HCT116 (cell line): ENCODE measurements at regions of chr4 and their contacts with region 1.

Region 1: GRCh38 chr4:141654098-141654497 is 17.7 kb downstream of the IL15 start:
- DNase-seq: no peak
- ATAC-seq: peak; percentile 93
- H3K4me3 ChIP-seq: no peak overlapping the region
- H3K27ac ChIP-seq: no peak overlapping the region
- H3K4me1 ChIP-seq: no peaks in the 10 kb centered on the region
- H3K27me3 ChIP-seq: no peaks in the 10 kb centered on the region
- CTCF ChIP-seq: peak; percentile 2 to 82 (median 68); a peak in 4 of 6 replicates
- POLR2A ChIP-seq: no peak
- RAD21 ChIP-seq: peak; percentile 43

Region 2: GRCh38 chr4:141081921-141082395 is 572.1 kb before region 1 on chr4:
- CTCF ChIA-PET with region 1: no interaction called
- POLR2A ChIA-PET with region 1: no interaction called
- RAD21 ChIA-PET with region 1: no interaction called
- intact Hi-C with region 1: no loop called
- DNase-seq: no peak
- ATAC-seq: no peak
- H3K4me3 ChIP-seq: no peak overlapping the region
- H3K27ac ChIP-seq: no peak overlapping the region
- H3K4me1 ChIP-seq: no peaks in the 10 kb centered on the region
- H3K27me3 ChIP-seq: no peaks in the 10 kb centered on the region
- CTCF ChIP-seq: no peak
- POLR2A ChIP-seq: no peak
- RAD21 ChIP-seq: no peak

Region 3: DNA sequence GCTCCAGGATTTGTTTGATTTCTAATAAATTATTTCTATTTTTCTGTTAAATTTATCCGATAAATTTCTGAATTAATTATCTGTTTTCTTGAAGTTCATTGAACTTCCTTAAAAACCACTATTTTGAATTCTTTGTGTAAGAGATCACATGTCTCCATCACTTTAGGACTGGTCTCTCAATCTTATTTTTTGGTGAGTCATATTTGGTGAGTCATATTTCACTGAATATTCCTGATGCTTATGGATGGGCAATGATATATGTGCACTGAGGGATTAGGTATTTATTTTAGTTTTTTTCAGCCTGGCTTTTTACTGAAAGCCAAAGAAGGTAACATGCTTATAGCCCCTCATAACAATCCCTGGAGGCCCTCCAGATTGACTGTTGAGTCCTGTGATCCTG is 66.2 kb before region 1 on chr4:
- CTCF ChIA-PET with region 1: no interaction called
- POLR2A ChIA-PET with region 1: no interaction called
- RAD21 ChIA-PET with region 1: no interaction called
- intact Hi-C with region 1: no loop called
- DNase-seq: no peak
- ATAC-seq: no peak
- H3K4me3 ChIP-seq: no peak overlapping the region
- H3K27ac ChIP-seq: no peak overlapping the region
- H3K4me1 ChIP-seq: no peaks in the 10 kb centered on the region
- H3K27me3 ChIP-seq: no peaks in the 10 kb centered on the region
- CTCF ChIP-seq: no peak
- POLR2A ChIP-seq: no peak
- RAD21 ChIP-seq: no peak

Region 4: GRCh38 chr4:141643557-141643956 is 10.5 kb before region 1 on chr4:
- CTCF ChIA-PET with region 1: interaction called, 12 read pairs
- POLR2A ChIA-PET with region 1: no interaction called
- RAD21 ChIA-PET with region 1: no interaction called
- intact Hi-C with region 1: no loop called
- DNase-seq: peak; percentile 23
- ATAC-seq: peak; percentile 78
- H3K4me3 ChIP-seq: no peak overlapping the region
- H3K27ac ChIP-seq: no peak overlapping the region
- H3K4me1 ChIP-seq: peaks cover 0 to 19% of the 10 kb centered on the region in 2 experiments; a peak in 2 of 4 replicates
- H3K27me3 ChIP-seq: no peaks in the 10 kb centered on the region
- CTCF ChIP-seq: no peak
- POLR2A ChIP-seq: no peak
- RAD21 ChIP-seq: no peak